ENCODE measurements at regions of chr7 and their contacts with region 1.

Region 1: GRCh38 chr7:4753711-4754432 is 21.6 kb upstream of the AP5Z1 start:
- DNase-seq: peak; percentile 64
- H3K4me3 ChIP-seq: no peak overlapping the region
- H3K27ac ChIP-seq: no peak overlapping the region
- H3K4me1 ChIP-seq: no peaks in the 10 kb centered on the region
- H3K27me3 ChIP-seq: no peaks in the 10 kb centered on the region
- CTCF ChIP-seq: peak; percentile 93

Region 2: DNA sequence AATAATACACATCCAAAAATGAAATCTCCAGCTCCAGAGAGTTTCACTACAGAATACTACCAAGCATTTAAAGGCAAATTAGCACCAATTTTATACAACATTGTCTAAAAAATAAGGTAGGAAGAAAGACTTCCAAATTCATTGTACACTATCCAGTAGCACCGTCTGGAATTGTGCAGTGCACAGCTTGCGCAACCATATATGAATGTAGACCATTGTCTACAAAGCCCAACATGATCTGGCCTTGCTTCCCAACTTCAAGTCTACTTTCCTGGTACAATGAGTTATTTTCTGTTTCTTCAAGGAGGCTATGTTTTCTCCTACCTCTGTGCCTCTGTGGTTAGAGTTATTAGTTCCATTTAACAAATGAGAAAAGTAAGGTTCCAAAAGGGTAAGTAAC is 187.2 kb before region 1 on chr7:
- CTCF ChIA-PET with region 1: no interaction called
- POLR2A ChIA-PET with region 1: no interaction called
- intact Hi-C with region 1: no loop called
- DNase-seq: no peak
- H3K4me3 ChIP-seq: no peak overlapping the region
- H3K27ac ChIP-seq: no peak overlapping the region
- H3K4me1 ChIP-seq: no peaks in the 10 kb centered on the region
- H3K27me3 ChIP-seq: peaks cover 8% of the 10 kb centered on the region
- CTCF ChIP-seq: no peak

Region 3: GRCh38 chr7:4610768-4611467 is 143.0 kb before region 1 on chr7:
- CTCF ChIA-PET with region 1: no interaction called
- POLR2A ChIA-PET with region 1: no interaction called
- intact Hi-C with region 1: loop called (anchors 1 kb)
- DNase-seq: peak; percentile 75
- H3K4me3 ChIP-seq: no peak overlapping the region
- H3K27ac ChIP-seq: no peak overlapping the region
- H3K4me1 ChIP-seq: peaks cover 12% of the 10 kb centered on the region
- H3K27me3 ChIP-seq: no peaks in the 10 kb centered on the region
- CTCF ChIP-seq: peak; percentile 74

Region 4: GRCh38 chr7:4681886-4682620 is 71.8 kb before region 1 on chr7 and contains the start of gene FOXK1:
- CTCF ChIA-PET with region 1: no interaction called
- POLR2A ChIA-PET with region 1: interaction called, 26 read pairs
- intact Hi-C with region 1: no loop called
- DNase-seq: peak; percentile 86
- H3K4me3 ChIP-seq: peak within 1 kb of the TSS; percentile 88
- H3K27ac ChIP-seq: peak within 1 kb of the TSS; percentile 84
- H3K4me1 ChIP-seq: peaks cover 13% of the 10 kb centered on the region
- H3K27me3 ChIP-seq: no peaks in the 10 kb centered on the region
- CTCF ChIP-seq: no peak
- total RNA-seq, gene FOXK1: 43.8 and 46.2 TPM in 2 replicates

Region 5: DNA sequence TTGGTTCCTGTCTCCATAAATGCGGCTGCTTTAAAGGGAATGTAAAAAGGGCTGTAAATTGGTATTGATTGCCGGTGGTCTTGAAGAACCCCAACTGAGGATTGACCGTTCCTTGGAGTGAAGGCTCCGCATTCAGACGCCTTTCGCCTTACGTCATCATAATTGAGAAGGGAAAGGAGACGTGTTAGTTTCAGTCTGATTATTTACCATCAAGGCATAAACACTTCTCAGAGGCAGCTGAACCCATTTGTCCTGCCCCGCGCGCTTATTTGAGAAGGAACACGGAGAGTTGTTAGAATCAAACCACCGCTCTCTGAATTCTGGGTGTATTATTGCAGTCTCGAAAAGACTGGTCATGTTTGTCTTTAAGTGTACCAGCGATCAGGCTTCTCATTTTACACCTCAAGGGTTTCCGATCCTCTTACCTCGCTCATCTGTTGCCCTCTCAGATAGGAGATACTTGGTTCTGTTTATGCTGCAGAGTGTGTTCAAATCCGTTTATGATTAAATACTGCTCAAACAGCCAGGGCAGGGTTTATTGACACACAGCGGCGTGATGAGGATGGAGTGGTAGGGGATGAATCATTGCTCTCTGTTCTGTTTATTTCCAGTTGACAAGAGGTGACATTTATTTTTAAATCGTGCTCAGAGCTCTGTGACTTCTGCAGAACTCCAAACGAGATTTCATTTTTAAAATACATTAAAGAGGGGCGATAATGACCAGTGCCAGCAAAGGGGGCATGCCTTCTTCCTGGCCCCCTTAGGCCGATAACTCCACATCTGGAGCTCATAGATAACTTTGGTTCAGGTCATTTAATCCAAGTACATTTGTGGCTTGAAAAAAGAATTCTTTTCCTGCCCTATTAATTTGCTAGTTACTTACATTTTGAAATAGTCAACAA is 41.3 kb before region 1 on chr7:
- CTCF ChIA-PET with region 1: no interaction called
- POLR2A ChIA-PET with region 1: no interaction called
- intact Hi-C with region 1: no loop called
- DNase-seq: no peak
- H3K4me3 ChIP-seq: no peak overlapping the region
- H3K27ac ChIP-seq: no peak overlapping the region
- H3K4me1 ChIP-seq: peaks cover 46% of the 10 kb centered on the region
- H3K27me3 ChIP-seq: no peaks in the 10 kb centered on the region
- CTCF ChIP-seq: no peak

Region 6: DNA sequence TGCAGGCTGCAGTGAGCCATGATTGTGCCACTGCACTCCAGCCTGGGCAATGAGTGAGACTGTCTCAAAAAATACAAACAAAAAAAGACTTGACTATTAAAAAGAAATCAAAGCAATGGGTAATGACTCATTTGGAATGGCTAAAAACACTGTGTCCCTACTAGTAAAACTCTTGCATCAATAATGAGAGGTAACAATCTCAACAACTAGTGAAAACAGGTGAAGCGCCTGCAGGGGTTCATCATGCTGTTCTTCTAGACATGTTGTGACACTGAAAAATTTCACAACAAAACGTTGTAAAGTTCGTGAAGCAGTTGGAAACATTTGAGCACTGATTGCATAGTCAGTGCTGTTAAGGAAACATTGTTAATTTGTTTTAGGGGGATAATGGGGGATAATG is 502.0 kb after region 1 on chr7:
- CTCF ChIA-PET with region 1: no interaction called
- POLR2A ChIA-PET with region 1: no interaction called
- intact Hi-C with region 1: no loop called
- DNase-seq: no peak
- H3K4me3 ChIP-seq: no peak overlapping the region
- H3K27ac ChIP-seq: no peak overlapping the region
- H3K4me1 ChIP-seq: no peaks in the 10 kb centered on the region
- H3K27me3 ChIP-seq: no peaks in the 10 kb centered on the region
- CTCF ChIP-seq: no peak